WTC11 (cell line): ENCODE measurements at regions of chr9 and their contacts with region 1.

Region 1: GRCh38 chr9:6692881-6693361 is 47.4 kb upstream of the GLDC start:
- DNase-seq: peak; percentile 37
- ATAC-seq: peak; percentile 81
- H3K4me3 Mint-ChIP-seq: peak overlapping the region; percentile 55
- H3K27ac Mint-ChIP-seq: peak overlapping the region; percentile 100
- H3K4me1 Mint-ChIP-seq: peaks cover 42% of the 10 kb centered on the region
- H3K27me3 Mint-ChIP-seq: no peaks in the 10 kb centered on the region
- CTCF ChIP-seq: no peak

Region 2: DNA sequence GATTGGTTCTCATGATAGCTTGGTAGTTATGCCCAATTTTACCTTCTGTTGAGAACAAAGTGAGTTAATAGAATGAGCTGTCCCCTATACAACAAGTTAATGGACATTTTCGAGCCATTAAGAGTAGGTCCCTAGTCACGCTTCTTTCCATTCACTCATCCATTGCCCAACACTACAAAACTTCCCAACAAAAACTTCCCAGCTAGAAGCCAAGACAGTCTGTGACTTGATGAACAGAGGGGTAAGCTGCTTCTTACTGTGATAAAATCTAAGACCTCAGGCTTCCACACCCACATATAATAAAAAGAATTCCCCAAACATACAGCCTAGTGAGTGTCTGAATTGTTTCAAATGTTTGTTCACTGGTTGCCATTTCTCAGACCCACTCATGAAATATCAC is 65.4 kb before region 1 on chr9:
- CTCF ChIA-PET with region 1: no interaction called
- POLR2A ChIA-PET with region 1: interaction called, 11 read pairs
- DNase-seq: no peak
- ATAC-seq: no peak
- H3K4me3 Mint-ChIP-seq: no peak overlapping the region
- H3K27ac Mint-ChIP-seq: peak overlapping the region; percentile 63
- H3K4me1 Mint-ChIP-seq: peaks cover 41% of the 10 kb centered on the region
- H3K27me3 Mint-ChIP-seq: no peaks in the 10 kb centered on the region
- CTCF ChIP-seq: no peak

Region 3: GRCh38 chr9:6733257-6733656 is 40.3 kb after region 1 on chr9:
- CTCF ChIA-PET with region 1: no interaction called
- POLR2A ChIA-PET with region 1: no interaction called
- DNase-seq: no peak
- ATAC-seq: no peak
- H3K4me3 Mint-ChIP-seq: no peak overlapping the region
- H3K27ac Mint-ChIP-seq: no peak overlapping the region
- H3K4me1 Mint-ChIP-seq: no peaks in the 10 kb centered on the region
- H3K27me3 Mint-ChIP-seq: peaks cover 9% of the 10 kb centered on the region; the same call in 1 of the 2 replicates
- CTCF ChIP-seq: no peak